ENCODE measurements at regions of chr3 and their contacts with region 1.

Region 1: DNA sequence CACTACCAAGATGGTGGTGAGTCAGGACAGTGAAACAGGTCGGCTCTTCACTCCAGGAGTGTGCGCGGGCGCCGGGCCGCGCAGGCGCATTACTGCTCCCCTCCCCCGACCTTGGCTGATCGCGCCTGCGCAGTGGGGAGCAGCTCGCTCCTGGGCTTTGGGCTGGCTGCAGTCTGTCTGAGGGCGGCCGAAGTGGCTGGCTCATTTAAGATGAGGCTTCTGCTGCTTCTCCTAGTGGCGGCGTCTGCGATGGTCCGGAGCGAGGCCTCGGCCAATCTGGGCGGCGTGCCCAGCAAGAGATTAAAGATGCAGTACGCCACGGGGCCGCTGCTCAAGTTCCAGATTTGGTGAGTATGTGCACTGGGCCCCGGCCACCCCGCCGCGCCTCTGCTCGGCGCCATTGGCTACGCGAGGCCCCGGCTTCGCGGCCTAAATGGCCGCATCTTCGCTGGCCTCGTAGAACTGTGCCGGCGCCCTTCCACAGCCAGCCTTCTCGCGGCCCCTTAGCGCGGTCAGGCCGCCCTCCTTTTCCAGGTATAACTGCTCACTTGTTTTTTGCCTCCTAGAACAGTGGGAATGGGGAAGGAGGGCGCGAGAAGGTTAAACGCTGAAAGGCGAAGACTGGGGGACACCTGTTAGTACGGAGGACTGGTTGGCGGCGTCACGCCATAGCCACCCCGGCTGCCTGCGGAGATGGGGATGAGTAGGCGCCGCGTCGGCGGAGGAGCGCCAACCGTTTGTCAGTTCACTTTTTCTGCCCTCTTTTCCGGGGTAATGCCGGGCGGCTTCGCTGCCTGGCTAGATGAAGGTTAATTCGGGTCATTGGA is at the start of gene SELENOT:
- DNase-seq: peak; percentile 97
- H3K4me3 ChIP-seq: peak within 1 kb of the TSS; percentile 71 to 85 (median 78)
- H3K27ac ChIP-seq: peak within 1 kb of the TSS; percentile 95 to 98 (median 97)
- H3K4me1 ChIP-seq: peaks cover 0 to 47% (median 45%) of the 10 kb centered on the region in 4 donors
- H3K27me3 ChIP-seq: no peaks in the 10 kb centered on the region
- CTCF ChIP-seq: peak in 3 of 4 experiments; percentile 19 to 33 (median 30)
- EP300 ChIP-seq: no peak
- POLR2A ChIP-seq: peak; percentile 94
- total RNA-seq, gene SELENOT: 80.4 to 126 (median 110) TPM

Region 2: GRCh38 chr3:150546226-150547044 is 56.9 kb before region 1 on chr3 and contains the starts of genes EIF2A and SERP1:
- intact Hi-C with region 1: loop called (anchors 2 kb)
- DNase-seq: peak; percentile 99
- H3K4me3 ChIP-seq: peak within 1 kb of the TSS; percentile 67 to 84 (median 74)
- H3K27ac ChIP-seq: peak within 1 kb of the TSS; percentile 96 to 99 (median 98)
- H3K4me1 ChIP-seq: peaks cover 0 to 44% (median 32%) of the 10 kb centered on the region in 4 donors
- H3K27me3 ChIP-seq: no peaks in the 10 kb centered on the region
- CTCF ChIP-seq: no peak
- EP300 ChIP-seq: peak in 1 of 4 donors; percentile 88
- POLR2A ChIP-seq: peak; percentile 95 to 96
- total RNA-seq, gene EIF2A: 147 to 228 (median 160) TPM
- total RNA-seq, gene SERP1: 140 to 197 (median 185) TPM

Region 3: DNA sequence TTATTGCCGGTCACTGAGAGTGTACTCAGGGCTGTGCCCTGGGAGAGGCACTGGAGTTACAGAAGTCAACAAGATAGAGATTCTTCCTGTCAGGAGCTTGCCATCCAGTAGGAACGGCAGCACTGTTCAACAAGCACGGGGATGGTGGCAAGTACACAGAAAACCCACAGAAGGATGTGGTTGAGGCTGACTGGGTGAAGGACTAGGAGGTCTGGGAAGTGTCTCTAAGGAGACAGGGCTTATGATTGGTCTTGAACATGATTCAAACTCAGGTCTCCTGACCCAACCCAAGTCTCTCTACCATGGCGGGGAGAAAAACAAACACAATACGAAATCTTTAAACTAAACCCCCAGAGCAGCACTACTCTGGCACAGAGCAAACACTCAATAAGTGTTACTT is 62.8 kb after region 1 on chr3:
- intact Hi-C with region 1: no loop called
- DNase-seq: no peak
- H3K4me3 ChIP-seq: no peak overlapping the region
- H3K27ac ChIP-seq: no peak overlapping the region
- H3K4me1 ChIP-seq: no peaks in the 10 kb centered on the region
- H3K27me3 ChIP-seq: no peaks in the 10 kb centered on the region
- CTCF ChIP-seq: no peak
- EP300 ChIP-seq: no peak
- POLR2A ChIP-seq: no peak

Region 4: GRCh38 chr3:150703299-150704134 is 100.2 kb after region 1 on chr3 and contains the start of gene ERICH6:
- intact Hi-C with region 1: loop called (anchors 2 kb)
- DNase-seq: peak; percentile 95
- H3K4me3 ChIP-seq: peak within 1 kb of the TSS; percentile 55 to 61 (median 56)
- H3K27ac ChIP-seq: peak within 1 kb of the TSS; percentile 76 to 80 (median 79)
- H3K4me1 ChIP-seq: peaks cover 0 to 15% (median 6%) of the 10 kb centered on the region in 4 donors
- H3K27me3 ChIP-seq: no peaks in the 10 kb centered on the region
- CTCF ChIP-seq: peak in 2 of 4 experiments; percentile 19 to 44
- EP300 ChIP-seq: no peak
- POLR2A ChIP-seq: peak in 1 of 2 donors; percentile 19
- total RNA-seq, gene ERICH6: not detected

Region 5: GRCh38 chr3:150763122-150763841 is 159.9 kb after region 1 on chr3 and contains the start of gene SIAH2:
- intact Hi-C with region 1: loop called (anchors 2 kb)
- DNase-seq: peak; percentile 96
- H3K4me3 ChIP-seq: peak within 1 kb of the TSS; percentile 70 to 90 (median 85)
- H3K27ac ChIP-seq: peak within 1 kb of the TSS; percentile 95 to 99 (median 98)
- H3K4me1 ChIP-seq: peaks cover 0 to 39% (median 30%) of the 10 kb centered on the region in 4 donors
- H3K27me3 ChIP-seq: no peaks in the 10 kb centered on the region
- CTCF ChIP-seq: no peak
- EP300 ChIP-seq: peak in 2 of 4 donors; percentile 35 to 71
- POLR2A ChIP-seq: peak in 1 of 2 donors; percentile 73
- total RNA-seq, gene SIAH2: 21.2 to 35.0 (median 24.5) TPM